CD8-positive, alpha-beta memory T cell (primary cell): ENCODE measurements at regions of chr12 and their contacts with region 1.

Region 1: DNA sequence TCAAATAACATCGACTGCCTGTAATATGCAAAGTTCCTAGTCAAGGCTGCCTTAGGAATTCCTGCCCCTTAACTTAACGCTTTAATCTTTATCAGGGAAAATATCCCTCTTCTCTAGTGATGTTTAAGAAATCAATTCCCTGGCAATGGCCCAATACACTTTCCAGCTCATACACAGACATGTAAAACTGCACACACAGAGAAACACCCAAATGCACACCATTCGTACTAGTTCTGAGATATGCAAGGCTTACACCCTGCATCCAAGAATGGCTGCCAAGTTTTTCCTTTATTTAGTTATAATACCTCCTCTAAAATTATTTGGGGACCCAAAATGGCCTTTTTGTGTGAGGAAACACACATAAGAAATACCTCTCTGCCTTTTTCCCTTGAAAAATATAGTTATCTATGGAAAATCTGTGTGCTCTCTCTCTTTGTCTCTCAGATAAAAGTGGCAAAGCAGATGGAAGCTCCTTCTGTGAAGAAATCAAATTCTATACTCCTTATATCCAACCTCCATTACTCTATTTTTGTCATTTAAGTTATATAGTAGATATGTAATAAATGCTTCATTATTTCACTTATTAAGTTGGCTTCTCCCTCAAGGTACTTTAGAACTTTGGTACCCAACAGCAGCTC is 120.0 kb upstream of the MDM1 start:
- DNase-seq: no peak
- H3K4me3 ChIP-seq: no peak overlapping the region
- H3K4me3 Mint-ChIP-seq: peak overlapping the region in 5 of 7 donors; percentile 82 to 89 (median 88)
- H3K27ac ChIP-seq: no peak overlapping the region
- H3K27ac Mint-ChIP-seq: peak overlapping the region; percentile 23 to 93 (median 64)
- H3K4me1 ChIP-seq: peaks cover 85% of the 10 kb centered on the region
- H3K4me1 Mint-ChIP-seq: peaks cover 92 to 98% (median 97%) of the 10 kb centered on the region in 3 donors
- H3K27me3 ChIP-seq: no peaks in the 10 kb centered on the region
- H3K27me3 Mint-ChIP-seq: no peaks in the 10 kb centered on the region

Region 2: GRCh38 chr12:68393417-68393816 is 58.8 kb before region 1 on chr12:
- CTCF ChIA-PET with region 1: no interaction called
- POLR2A ChIA-PET with region 1: interaction called, 10 read pairs
- DNase-seq: no peak
- H3K4me3 ChIP-seq: no peak overlapping the region
- H3K4me3 Mint-ChIP-seq: no peak overlapping the region
- H3K27ac ChIP-seq: no peak overlapping the region
- H3K27ac Mint-ChIP-seq: no peak overlapping the region
- H3K4me1 ChIP-seq: no peaks in the 10 kb centered on the region
- H3K4me1 Mint-ChIP-seq: peaks cover 6 to 13% (median 7%) of the 10 kb centered on the region in 3 donors
- H3K27me3 ChIP-seq: no peaks in the 10 kb centered on the region
- H3K27me3 Mint-ChIP-seq: peaks cover 0 to 1% of the 10 kb centered on the region in 2 donors

Region 3: GRCh38 chr12:68497702-68498101 is 45.5 kb after region 1 on chr12:
- CTCF ChIA-PET with region 1: no interaction called
- POLR2A ChIA-PET with region 1: interaction called, 10 read pairs
- DNase-seq: no peak
- H3K4me3 ChIP-seq: no peak overlapping the region
- H3K4me3 Mint-ChIP-seq: peak overlapping the region; percentile 37 to 87 (median 72)
- H3K27ac ChIP-seq: no peak overlapping the region
- H3K27ac Mint-ChIP-seq: peak overlapping the region in 4 of 8 donors; percentile 12 to 80 (median 42)
- H3K4me1 ChIP-seq: no peaks in the 10 kb centered on the region
- H3K4me1 Mint-ChIP-seq: peaks cover 20 to 25% (median 24%) of the 10 kb centered on the region in 3 donors
- H3K27me3 ChIP-seq: no peaks in the 10 kb centered on the region
- H3K27me3 Mint-ChIP-seq: no peaks in the 10 kb centered on the region

Region 4: DNA sequence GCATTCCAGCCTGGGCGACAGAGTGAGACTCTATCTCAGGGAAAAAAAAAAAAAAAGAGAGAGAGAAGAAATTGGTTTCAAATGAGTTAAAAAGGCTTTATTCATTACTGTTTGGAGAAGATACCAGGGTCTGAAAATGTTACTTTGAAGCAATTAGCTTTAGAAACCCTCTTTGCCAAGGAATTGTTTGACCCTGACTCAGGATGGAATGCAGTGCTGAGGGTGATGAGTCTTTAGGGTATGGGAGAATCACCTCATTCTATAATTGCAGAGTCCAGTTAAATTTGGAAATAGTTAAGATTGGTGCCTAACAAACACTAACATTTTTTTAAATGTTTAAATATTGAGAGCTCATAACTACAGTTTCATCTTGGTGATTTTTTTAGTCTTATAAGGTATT is 171.8 kb after region 1 on chr12:
- CTCF ChIA-PET with region 1: no interaction called
- POLR2A ChIA-PET with region 1: no interaction called
- DNase-seq: no peak
- H3K4me3 ChIP-seq: no peak overlapping the region
- H3K4me3 Mint-ChIP-seq: peak overlapping the region in 4 of 7 donors; percentile 7 to 76 (median 28)
- H3K27ac ChIP-seq: no peak overlapping the region
- H3K27ac Mint-ChIP-seq: peak overlapping the region in 5 of 8 donors; percentile 33 to 78 (median 65)
- H3K4me1 ChIP-seq: peaks cover 68% of the 10 kb centered on the region
- H3K4me1 Mint-ChIP-seq: peaks cover 81 to 96% (median 95%) of the 10 kb centered on the region in 3 donors
- H3K27me3 ChIP-seq: no peaks in the 10 kb centered on the region
- H3K27me3 Mint-ChIP-seq: no peaks in the 10 kb centered on the region